Activated CD8-positive, alpha-beta T cell treated with anti-CD3 and anti-CD28 coated beads for 36 hours (primary cell): ENCODE measurements at regions of chr2 and their contacts with region 1.

Region 1: DNA sequence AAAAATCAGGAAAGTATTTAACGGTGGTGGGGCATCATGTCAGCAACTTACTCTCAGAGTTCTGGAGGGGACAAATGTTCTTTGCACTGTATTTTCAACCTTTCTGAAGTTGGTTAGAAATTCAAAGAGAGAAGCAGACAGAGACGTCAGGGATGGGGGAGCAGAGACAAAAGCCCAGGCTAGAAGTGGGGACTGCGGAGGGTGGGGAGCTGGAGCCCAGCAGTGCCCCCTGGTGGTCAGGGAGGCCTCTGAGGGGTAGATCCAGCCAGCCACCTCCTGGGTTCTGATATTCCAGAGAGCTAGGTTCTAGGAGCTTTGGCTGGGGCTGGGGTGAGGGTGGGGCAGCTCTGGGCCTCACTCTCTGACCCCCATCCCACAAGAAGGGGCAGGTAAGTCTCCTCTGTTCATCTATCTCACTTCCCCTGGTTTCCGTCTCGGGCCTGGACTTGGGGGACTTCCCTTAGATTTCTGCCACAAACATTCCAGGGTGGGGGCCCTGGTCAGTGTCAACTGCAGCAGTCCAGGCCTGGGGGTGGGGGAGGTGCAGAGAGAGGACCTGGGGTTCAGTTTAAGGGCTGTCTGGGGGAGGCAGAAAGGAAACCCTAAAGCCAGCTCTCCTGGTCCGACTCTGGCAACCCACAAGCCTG is 8.9 kb downstream of the TNS1 start:
- DNase-seq: peak; percentile 75
- ATAC-seq: peak; percentile 77
- H3K4me3 Mint-ChIP-seq: no peak overlapping the region
- H3K27ac Mint-ChIP-seq: no peak overlapping the region
- H3K4me1 Mint-ChIP-seq: peaks cover 5% of the 10 kb centered on the region
- H3K27me3 Mint-ChIP-seq: peaks cover 6% of the 10 kb centered on the region
- CTCF ChIP-seq: peak; percentile 83

Region 2: GRCh38 chr2:217886720-217887309 is 107.1 kb before region 1 on chr2:
- CTCF ChIA-PET with region 1: interaction called, 11 read pairs
- POLR2A ChIA-PET with region 1: no interaction called
- intact Hi-C with region 1: no loop called
- DNase-seq: peak; percentile 79
- ATAC-seq: peak; percentile 87
- H3K4me3 Mint-ChIP-seq: no peak overlapping the region
- H3K27ac Mint-ChIP-seq: no peak overlapping the region
- H3K4me1 Mint-ChIP-seq: no peaks in the 10 kb centered on the region
- H3K27me3 Mint-ChIP-seq: peaks cover 2% of the 10 kb centered on the region
- CTCF ChIP-seq: peak; percentile 71

Region 3: GRCh38 chr2:217975641-217976040 is 18.3 kb before region 1 on chr2:
- CTCF ChIA-PET with region 1: interaction called, 10 read pairs
- POLR2A ChIA-PET with region 1: no interaction called
- intact Hi-C with region 1: no loop called
- DNase-seq: no peak
- ATAC-seq: no peak
- H3K4me3 Mint-ChIP-seq: no peak overlapping the region
- H3K27ac Mint-ChIP-seq: no peak overlapping the region
- H3K4me1 Mint-ChIP-seq: no peaks in the 10 kb centered on the region
- H3K27me3 Mint-ChIP-seq: peaks cover 1% of the 10 kb centered on the region
- CTCF ChIP-seq: no peak

Region 4: GRCh38 chr2:218010140-218010983 is 16.4 kb after region 1 on chr2:
- CTCF ChIA-PET with region 1: interaction called, 16 read pairs
- POLR2A ChIA-PET with region 1: no interaction called
- intact Hi-C with region 1: no loop called
- DNase-seq: peak; percentile 39
- ATAC-seq: peak; percentile 79
- H3K4me3 Mint-ChIP-seq: peak overlapping the region; percentile 45
- H3K27ac Mint-ChIP-seq: no peak overlapping the region
- H3K4me1 Mint-ChIP-seq: peaks cover 7% of the 10 kb centered on the region
- H3K27me3 Mint-ChIP-seq: peaks cover 40% of the 10 kb centered on the region
- CTCF ChIP-seq: peak; percentile 41

Region 5: GRCh38 chr2:218066926-218067515 is 73.1 kb after region 1 on chr2:
- CTCF ChIA-PET with region 1: interaction called, 10 read pairs
- POLR2A ChIA-PET with region 1: no interaction called
- intact Hi-C with region 1: no loop called
- DNase-seq: no peak
- ATAC-seq: no peak
- H3K4me3 Mint-ChIP-seq: no peak overlapping the region
- H3K27ac Mint-ChIP-seq: no peak overlapping the region
- H3K4me1 Mint-ChIP-seq: peaks cover 7% of the 10 kb centered on the region
- H3K27me3 Mint-ChIP-seq: peaks cover 12% of the 10 kb centered on the region
- CTCF ChIP-seq: no peak

Region 6: DNA sequence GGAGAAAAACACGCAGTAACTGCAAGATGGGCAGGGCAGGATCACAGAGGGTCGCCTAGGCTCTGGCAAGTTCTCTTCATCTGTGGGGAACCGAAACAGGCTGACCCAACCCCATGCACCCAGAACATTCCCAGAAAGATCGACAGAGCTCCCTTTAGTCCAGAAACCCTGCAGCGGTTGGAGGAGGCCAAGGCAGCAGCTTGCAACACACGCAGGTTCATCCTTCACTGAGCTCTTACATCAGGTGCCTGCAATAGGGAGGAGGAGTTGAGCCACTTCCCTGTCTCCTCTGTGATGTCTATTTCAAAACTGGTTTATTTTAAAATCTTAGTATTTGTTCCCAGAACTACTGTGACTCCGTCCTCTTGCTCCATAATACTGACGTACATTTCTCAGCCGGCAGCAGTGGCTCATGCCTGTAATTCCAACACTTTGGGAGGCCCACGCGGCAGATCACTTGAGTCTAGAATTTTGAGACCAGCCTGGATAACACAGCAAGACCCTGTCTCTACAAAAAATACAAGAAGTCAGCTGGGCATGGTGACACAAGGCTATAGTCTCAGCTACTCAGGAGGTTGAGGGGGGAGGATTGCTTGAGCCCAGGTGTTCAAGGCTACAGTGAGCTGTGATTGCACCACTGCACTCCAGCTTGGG is 376.6 kb after region 1 on chr2:
- CTCF ChIA-PET with region 1: no interaction called
- POLR2A ChIA-PET with region 1: no interaction called
- intact Hi-C with region 1: no loop called
- DNase-seq: no peak
- ATAC-seq: no peak
- H3K4me3 Mint-ChIP-seq: no peak overlapping the region
- H3K27ac Mint-ChIP-seq: no peak overlapping the region
- H3K4me1 Mint-ChIP-seq: peaks cover 16% of the 10 kb centered on the region
- H3K27me3 Mint-ChIP-seq: peaks cover 1% of the 10 kb centered on the region
- CTCF ChIP-seq: no peak